Aorta (tissue), 5 donors: ENCODE measurements at regions of chr1 and their contacts with region 1.

Region 1: DNA sequence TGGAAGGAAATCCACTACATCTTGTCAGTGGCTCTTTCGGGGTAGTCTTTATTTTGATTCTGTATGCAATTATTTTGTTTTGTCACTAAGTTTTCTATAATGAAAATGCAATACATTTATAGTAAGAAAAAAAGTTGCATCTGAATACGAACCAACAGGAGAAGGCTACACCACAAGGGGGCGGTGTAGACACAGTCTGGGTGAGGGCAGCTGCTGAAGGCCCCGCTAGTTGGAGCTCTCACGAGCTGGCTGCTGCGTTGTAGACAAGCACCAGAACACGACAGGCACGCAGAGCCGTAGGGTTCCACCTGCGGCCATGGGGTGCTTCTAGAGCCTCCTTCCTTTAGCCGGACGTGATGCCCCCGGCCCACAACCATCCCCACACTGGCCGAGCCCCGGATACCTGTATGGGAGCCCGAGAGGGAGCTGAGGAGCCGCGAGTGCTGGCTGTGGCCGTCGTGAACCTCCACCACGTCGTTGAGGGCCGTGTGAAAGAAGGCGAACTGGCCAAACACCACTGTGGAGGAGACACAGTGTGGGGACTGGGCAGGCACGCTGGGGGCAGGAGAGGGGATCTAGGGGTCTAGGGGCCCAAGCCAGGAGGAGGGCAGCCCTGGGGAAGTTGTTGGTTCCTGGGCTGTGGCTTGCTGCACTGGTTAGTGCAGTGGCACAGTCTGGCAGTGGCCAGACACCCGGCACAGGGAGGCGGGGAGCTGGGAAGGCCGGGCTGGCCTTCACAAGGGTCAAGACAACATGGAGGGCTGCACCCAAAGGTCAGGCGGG is 160.8 kb downstream of the ZSCAN20 start:
- DNase-seq: peak; percentile 93 to 96
- ATAC-seq: peak; percentile 90
- H3K4me3 ChIP-seq: no peak overlapping the region
- H3K27ac ChIP-seq: no peak overlapping the region
- H3K4me1 ChIP-seq: no peaks in the 10 kb centered on the region
- H3K27me3 ChIP-seq: no peaks in the 10 kb centered on the region

Region 2: DNA sequence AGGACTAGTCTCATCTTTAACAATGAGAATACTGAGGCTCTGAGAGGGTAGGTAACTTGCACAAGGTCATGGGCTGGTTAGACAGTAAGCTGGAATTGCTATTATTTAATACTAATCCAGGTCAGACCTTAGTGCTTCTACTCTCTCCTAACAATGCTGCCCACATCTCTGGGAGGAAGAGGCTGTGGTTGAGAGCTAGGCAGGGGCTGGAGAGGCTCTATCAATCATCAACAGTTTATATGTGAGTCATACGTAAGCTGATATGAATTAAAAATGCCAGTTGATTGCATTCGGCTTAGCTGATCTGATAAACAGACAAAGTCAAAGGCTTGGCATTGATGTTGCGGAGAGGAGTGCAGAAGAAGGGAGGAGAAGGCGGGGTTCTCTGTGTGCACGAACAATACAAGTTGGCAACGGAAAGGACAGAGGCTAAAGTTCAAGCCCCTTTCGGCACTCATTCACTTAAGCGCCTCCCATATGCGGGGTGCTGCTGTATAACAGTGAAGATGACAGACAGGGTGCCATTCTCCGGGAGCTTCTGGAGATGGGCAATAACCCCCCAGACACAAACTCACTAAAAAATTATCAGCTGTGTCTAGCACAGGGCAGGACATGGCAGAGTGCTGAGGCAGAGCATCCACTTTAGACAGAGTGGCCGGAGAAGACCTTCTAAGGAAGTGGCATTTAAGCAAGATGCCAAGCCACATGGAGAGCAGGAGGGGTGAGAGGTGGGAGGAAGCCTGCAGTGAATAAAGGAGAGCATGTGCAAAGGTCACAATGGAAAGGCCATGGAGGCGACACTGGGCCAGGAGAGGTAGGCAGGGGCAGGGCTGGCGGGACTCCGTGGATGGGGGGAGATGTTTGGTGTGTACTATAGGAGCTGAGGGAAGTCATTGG is 34.4 kb after region 1 on chr1:
- intact Hi-C with region 1: no loop called
- DNase-seq: no peak
- ATAC-seq: no peak
- H3K4me3 ChIP-seq: no peak overlapping the region
- H3K27ac ChIP-seq: no peak overlapping the region
- H3K4me1 ChIP-seq: no peaks in the 10 kb centered on the region
- H3K27me3 ChIP-seq: no peaks in the 10 kb centered on the region

Region 3: GRCh38 chr1:34597877-34598514 is 964.8 kb after region 1 on chr1:
- intact Hi-C with region 1: loop called in 1 of 2 experiments (anchors 5 kb)
- DNase-seq: peak; percentile 66 to 77
- ATAC-seq: no peak
- H3K4me3 ChIP-seq: no peak overlapping the region
- H3K27ac ChIP-seq: no peak overlapping the region
- H3K4me1 ChIP-seq: no peaks in the 10 kb centered on the region
- H3K27me3 ChIP-seq: no peaks in the 10 kb centered on the region

Region 4: DNA sequence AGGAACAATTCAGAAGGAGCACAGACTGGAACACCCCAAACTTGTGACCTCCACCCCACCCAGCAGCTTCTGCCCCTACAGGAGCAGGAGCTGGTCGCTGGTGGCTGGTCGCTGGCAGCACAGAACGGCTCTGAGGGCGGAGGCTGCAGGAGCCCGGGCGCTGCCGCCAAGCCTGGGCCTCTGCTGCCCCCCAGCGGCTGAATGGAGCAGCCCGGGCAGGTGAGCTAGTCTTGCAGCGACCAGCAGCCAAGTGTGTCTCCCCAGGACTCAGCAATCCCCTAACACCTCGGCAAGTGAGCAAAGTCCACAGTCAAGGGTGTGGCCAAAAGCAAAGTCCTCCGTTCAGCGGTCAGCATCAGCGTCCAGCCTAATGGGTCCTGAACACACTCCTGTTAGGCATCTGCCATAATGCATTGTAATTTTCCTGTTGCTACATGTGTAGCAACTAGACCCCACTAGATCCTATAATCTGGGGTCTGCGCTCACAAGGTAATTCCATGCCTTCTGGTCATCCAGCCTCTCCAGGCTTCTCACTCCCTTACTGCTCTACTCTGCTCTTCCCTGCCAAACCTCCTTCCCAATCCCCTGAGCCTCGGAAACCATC is 1109.6 kb after region 1 on chr1:
- intact Hi-C with region 1: loop called (anchors 5 to 10 kb)
- DNase-seq: peak; percentile 79 to 93
- ATAC-seq: peak; percentile 80
- H3K4me3 ChIP-seq: no peak overlapping the region
- H3K27ac ChIP-seq: no peak overlapping the region
- H3K4me1 ChIP-seq: no peaks in the 10 kb centered on the region
- H3K27me3 ChIP-seq: no peaks in the 10 kb centered on the region